HCT116 (cell line): ENCODE measurements at regions of chr3 and their contacts with region 1.

Region 1: GRCh38 chr3:111904376-111905241 is 45.5 kb downstream of the PHLDB2 start:
- DNase-seq: peak; percentile 89
- ATAC-seq: peak; percentile 29
- H3K4me3 ChIP-seq: no peak overlapping the region
- H3K27ac ChIP-seq: peak overlapping the region; percentile 96
- H3K4me1 ChIP-seq: peaks cover 44 to 100% of the 10 kb centered on the region in 2 experiments
- H3K27me3 ChIP-seq: no peaks in the 10 kb centered on the region
- CTCF ChIP-seq: peak in 1 of 3 experiments; percentile 26; a peak in 2 of 6 replicates
- POLR2A ChIP-seq: no peak
- RAD21 ChIP-seq: no peak

Region 2: GRCh38 chr3:111794711-111795110 is 109.9 kb before region 1 on chr3:
- CTCF ChIA-PET with region 1: no interaction called
- POLR2A ChIA-PET with region 1: no interaction called
- RAD21 ChIA-PET with region 1: no interaction called
- intact Hi-C with region 1: no loop called
- DNase-seq: no peak
- ATAC-seq: no peak
- H3K4me3 ChIP-seq: no peak overlapping the region
- H3K27ac ChIP-seq: no peak overlapping the region
- H3K4me1 ChIP-seq: no peaks in the 10 kb centered on the region
- H3K27me3 ChIP-seq: no peaks in the 10 kb centered on the region
- CTCF ChIP-seq: no peak
- POLR2A ChIP-seq: no peak
- RAD21 ChIP-seq: no peak

Region 3: GRCh38 chr3:111859974-111860859 is 44.4 kb before region 1 on chr3:
- CTCF ChIA-PET with region 1: interaction called, 3 read pairs
- POLR2A ChIA-PET with region 1: interaction called, 14 read pairs
- RAD21 ChIA-PET with region 1: no interaction called
- intact Hi-C with region 1: no loop called
- DNase-seq: peak; percentile 82
- ATAC-seq: peak; percentile 56
- H3K4me3 ChIP-seq: peak overlapping the region; percentile 84 to 88
- H3K27ac ChIP-seq: peak overlapping the region; percentile 96
- H3K4me1 ChIP-seq: peaks cover 56 to 80% of the 10 kb centered on the region in 2 experiments
- H3K27me3 ChIP-seq: no peaks in the 10 kb centered on the region
- CTCF ChIP-seq: peak; percentile 36 to 50 (median 39); a peak in 5 of 6 replicates
- POLR2A ChIP-seq: peak; percentile 2
- RAD21 ChIP-seq: peak; percentile 69

Region 4: GRCh38 chr3:111924283-111924682 is 19.7 kb after region 1 on chr3:
- CTCF ChIA-PET with region 1: interaction called, 3 read pairs
- POLR2A ChIA-PET with region 1: interaction called, 152 read pairs
- RAD21 ChIA-PET with region 1: no interaction called
- intact Hi-C with region 1: loop called (anchors 1 kb)
- DNase-seq: no peak
- ATAC-seq: no peak
- H3K4me3 ChIP-seq: no peak overlapping the region
- H3K27ac ChIP-seq: peak overlapping the region; percentile 96
- H3K4me1 ChIP-seq: peaks cover 69 to 95% of the 10 kb centered on the region in 2 experiments
- H3K27me3 ChIP-seq: no peaks in the 10 kb centered on the region
- CTCF ChIP-seq: no peak
- POLR2A ChIP-seq: no peak
- RAD21 ChIP-seq: no peak

Region 5: GRCh38 chr3:111936191-111936841 is 31.7 kb after region 1 on chr3:
- CTCF ChIA-PET with region 1: no interaction called
- POLR2A ChIA-PET with region 1: interaction called, 26 read pairs
- RAD21 ChIA-PET with region 1: no interaction called
- intact Hi-C with region 1: no loop called
- DNase-seq: peak; percentile 60
- ATAC-seq: peak; percentile 78
- H3K4me3 ChIP-seq: peak overlapping the region in 1 of 2 experiments; percentile 0; a peak in 1 of 4 replicates
- H3K27ac ChIP-seq: peak overlapping the region; percentile 96
- H3K4me1 ChIP-seq: peaks cover 66 to 78% of the 10 kb centered on the region in 2 experiments
- H3K27me3 ChIP-seq: no peaks in the 10 kb centered on the region
- CTCF ChIP-seq: no peak
- POLR2A ChIP-seq: no peak
- RAD21 ChIP-seq: 0 out of 2 replicates have a peak, but pooled peaks have one; percentile 2

Region 6: GRCh38 chr3:113070681-113071143 is 1166.1 kb after region 1 on chr3:
- CTCF ChIA-PET with region 1: no interaction called
- POLR2A ChIA-PET with region 1: no interaction called
- RAD21 ChIA-PET with region 1: no interaction called
- intact Hi-C with region 1: no loop called
- DNase-seq: no peak
- ATAC-seq: 0 out of 2 replicates have a peak, but pooled peaks have one; percentile 17
- H3K4me3 ChIP-seq: no peak overlapping the region
- H3K27ac ChIP-seq: no peak overlapping the region
- H3K4me1 ChIP-seq: peaks cover 0 to 6% of the 10 kb centered on the region in 2 experiments; a peak in 1 of 4 replicates
- H3K27me3 ChIP-seq: no peaks in the 10 kb centered on the region
- CTCF ChIP-seq: no peak
- POLR2A ChIP-seq: no peak
- RAD21 ChIP-seq: no peak